ENCODE measurements at regions of chr19 and their contacts with region 1.

Region 1: GRCh38 chr19:47210689-47211316 is 20.2 kb downstream of the BBC3 start:
- DNase-seq: peak; percentile 73

Region 2: DNA sequence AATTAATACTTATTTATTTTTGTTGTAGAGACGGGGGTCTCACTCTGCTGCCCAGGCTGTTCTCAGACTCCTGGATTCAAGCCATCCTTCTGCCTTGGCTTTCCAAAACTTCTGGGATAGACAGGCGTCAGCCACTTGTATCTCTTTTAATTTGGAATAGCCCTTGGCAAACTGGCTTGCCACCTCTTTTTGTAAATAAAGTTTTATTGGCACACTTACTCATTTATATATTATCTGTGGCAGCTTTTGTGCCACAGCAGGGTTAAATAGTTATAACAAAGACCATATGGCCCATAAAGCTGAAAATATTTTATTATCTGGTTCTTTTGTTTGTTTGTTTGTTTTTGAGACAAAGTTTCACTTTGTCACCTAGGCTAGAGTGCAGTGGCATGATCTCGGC is 10.3 kb before region 1 on chr19:
- CTCF ChIA-PET with region 1: interaction called, 12 read pairs
- POLR2A ChIA-PET with region 1: no interaction called
- DNase-seq: no peak

Measured in HEK293T (cell line).